BJ (cell line): ENCODE measurements at regions of chr17 and their contacts with region 1.

Region 1: DNA sequence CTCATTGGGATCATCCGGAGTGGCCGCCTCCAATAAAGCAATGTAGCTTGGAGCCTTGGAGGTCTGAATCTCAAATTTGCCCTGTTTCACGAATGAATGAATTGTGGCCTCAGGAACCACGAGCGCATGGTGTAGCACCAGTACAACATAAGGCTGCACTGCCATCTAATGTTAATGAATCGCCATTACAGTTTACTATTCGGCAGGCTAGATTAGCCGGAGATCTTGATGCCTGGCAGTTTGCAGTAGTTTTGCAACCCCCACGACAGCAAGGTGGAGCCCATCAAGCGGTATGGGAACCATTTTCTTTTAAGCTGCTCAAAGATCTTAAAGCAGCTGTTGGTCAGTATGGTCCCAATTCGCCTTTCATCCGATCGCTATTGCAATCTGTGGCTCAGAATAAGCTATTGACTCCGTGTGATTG is 18.8 kb downstream of the ALOX15B start:
- DNase-seq: peak; percentile 15
- H3K4me3 ChIP-seq: no peak overlapping the region
- H3K27me3 ChIP-seq: peaks cover 23% of the 10 kb centered on the region
- CTCF ChIP-seq: peak; percentile 69

Region 2: GRCh38 chr17:7997186-7997585 is 60.5 kb before region 1 on chr17:
- CTCF ChIA-PET with region 1: interaction called, 14 read pairs
- POLR2A ChIA-PET with region 1: no interaction called
- DNase-seq: no peak
- H3K4me3 ChIP-seq: no peak overlapping the region
- H3K27me3 ChIP-seq: peaks cover 11% of the 10 kb centered on the region
- CTCF ChIP-seq: peak; percentile 56

Region 3: GRCh38 chr17:8022360-8023003 is 35.2 kb before region 1 on chr17:
- CTCF ChIA-PET with region 1: interaction called, 18 read pairs
- POLR2A ChIA-PET with region 1: no interaction called
- DNase-seq: no peak
- H3K4me3 ChIP-seq: no peak overlapping the region
- H3K27me3 ChIP-seq: peaks cover 16% of the 10 kb centered on the region
- CTCF ChIP-seq: no peak

Region 4: DNA sequence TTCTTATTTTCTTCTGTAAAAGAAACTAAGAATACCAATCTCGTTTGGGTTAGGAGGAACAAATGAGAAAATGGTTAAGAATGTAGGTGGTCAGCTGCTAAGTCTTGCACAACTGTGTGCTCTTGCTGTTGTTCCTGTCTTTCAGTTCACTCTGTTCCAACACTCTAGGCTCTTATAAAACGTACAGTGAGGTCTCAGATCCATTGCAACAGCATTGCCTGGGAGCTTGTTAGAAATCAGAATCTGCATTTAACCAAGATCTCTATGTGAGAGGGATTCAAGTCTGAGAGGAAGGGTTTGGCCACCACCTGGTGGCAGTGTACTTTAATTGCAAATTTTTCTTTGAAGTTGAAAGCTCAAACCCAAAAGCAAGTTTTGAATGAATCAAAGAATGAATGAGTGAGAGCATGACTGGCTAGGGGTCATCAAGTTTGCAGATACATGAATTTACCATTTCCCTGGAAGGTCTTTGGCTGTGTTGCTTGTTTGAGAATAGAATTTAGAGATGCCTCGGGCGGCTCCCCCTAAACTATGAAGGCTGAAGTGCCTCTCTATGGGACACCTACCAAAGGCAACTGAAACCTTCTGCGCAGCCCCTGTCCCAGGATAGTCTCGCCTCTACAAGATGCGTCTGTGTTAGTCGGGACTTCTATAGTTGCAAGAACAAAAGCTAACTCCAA is 16.3 kb before region 1 on chr17:
- CTCF ChIA-PET with region 1: interaction called, 31 read pairs
- POLR2A ChIA-PET with region 1: no interaction called
- DNase-seq: peak; percentile 13
- H3K4me3 ChIP-seq: no peak overlapping the region
- H3K27me3 ChIP-seq: peaks cover 17% of the 10 kb centered on the region
- CTCF ChIP-seq: peak; percentile 62

Region 5: GRCh38 chr17:8073627-8074484 is 16.2 kb after region 1 on chr17:
- CTCF ChIA-PET with region 1: interaction called, 72 read pairs
- POLR2A ChIA-PET with region 1: no interaction called
- DNase-seq: no peak
- H3K4me3 ChIP-seq: no peak overlapping the region
- H3K27me3 ChIP-seq: peaks cover 52% of the 10 kb centered on the region
- CTCF ChIP-seq: peak; percentile 94

Region 6: DNA sequence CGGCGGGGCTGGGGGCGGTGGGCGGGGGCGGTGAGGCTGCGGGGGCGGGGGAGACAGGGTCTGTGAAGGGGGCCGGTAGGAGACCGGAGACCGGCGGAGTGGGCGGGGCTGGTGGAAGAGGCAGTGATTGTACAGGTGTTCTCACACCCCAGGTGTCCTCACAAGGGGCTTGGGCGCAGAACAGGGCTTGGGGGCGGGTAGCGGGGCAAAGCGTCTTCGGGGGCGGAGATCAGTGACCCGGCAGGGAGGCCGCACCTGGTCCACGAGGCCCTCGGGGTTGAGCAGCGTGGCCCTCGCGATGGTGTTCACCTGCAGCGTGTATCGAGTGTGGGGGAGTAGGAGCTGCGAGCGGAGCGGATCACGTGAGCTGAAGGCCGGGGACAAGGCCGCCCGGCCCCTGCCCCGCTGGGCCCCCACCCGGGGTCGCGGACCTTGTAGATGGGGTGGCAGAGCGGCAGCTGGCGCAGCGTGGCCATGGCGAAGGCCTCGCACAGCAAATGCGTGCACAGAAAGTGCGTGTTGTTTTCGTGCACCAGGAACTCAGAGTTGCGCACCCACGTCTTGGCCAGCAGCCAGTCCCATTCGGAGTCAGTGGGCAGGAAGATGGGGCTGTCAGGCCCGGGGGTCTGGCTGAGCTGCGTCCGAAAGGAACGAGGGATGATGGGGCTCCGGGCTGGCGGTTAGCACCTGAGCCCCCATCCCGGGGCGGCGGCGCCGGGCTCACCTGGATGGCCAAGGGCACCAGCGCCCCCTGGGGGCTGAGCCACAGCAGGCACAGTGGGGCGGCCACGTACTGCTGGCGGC is 52.2 kb after region 1 on chr17:
- CTCF ChIA-PET with region 1: interaction called, 18 read pairs
- POLR2A ChIA-PET with region 1: no interaction called
- DNase-seq: no peak
- H3K4me3 ChIP-seq: no peak overlapping the region
- H3K27me3 ChIP-seq: peaks cover 32% of the 10 kb centered on the region
- CTCF ChIP-seq: peak; percentile 77

Region 7: DNA sequence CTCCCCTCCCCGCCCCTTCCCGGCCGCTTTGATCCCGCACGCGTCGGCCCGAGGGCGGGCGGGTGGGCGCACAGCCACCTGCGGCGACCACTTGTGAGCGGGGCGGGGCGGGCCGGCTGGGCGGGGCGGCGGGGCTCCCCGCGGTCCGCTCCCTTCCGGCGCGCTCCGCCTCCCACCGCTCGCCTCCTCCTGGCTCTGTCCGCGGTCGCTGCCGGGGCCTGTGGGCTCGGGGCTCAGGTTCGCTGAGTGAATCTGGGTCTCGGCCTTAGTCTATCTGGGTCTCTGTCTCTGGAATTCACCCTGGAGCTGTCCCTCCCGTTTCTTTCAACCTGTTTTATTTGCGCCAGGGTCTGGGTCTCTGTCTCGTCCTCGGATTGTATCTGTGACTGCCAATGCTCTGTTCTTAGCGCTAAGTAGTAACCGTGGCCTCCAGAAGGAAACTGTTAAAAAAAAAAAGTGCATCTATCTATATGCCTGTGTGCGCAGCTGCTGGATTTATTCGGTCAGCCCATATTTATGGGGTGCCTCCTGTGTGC is 68.9 kb after region 1 on chr17:
- CTCF ChIA-PET with region 1: no interaction called
- POLR2A ChIA-PET with region 1: no interaction called
- DNase-seq: no peak
- H3K4me3 ChIP-seq: peak overlapping the region; percentile 56
- H3K27me3 ChIP-seq: no peaks in the 10 kb centered on the region; the same call in 1 of the 2 replicates
- CTCF ChIP-seq: no peak

Region 8: GRCh38 chr17:8275421-8276290 is 218.0 kb after region 1 on chr17:
- CTCF ChIA-PET with region 1: no interaction called
- POLR2A ChIA-PET with region 1: no interaction called
- DNase-seq: no peak
- H3K4me3 ChIP-seq: no peak overlapping the region
- H3K27me3 ChIP-seq: no peaks in the 10 kb centered on the region
- CTCF ChIP-seq: no peak